PC-3 (cell line): ENCODE measurements at regions of chr14 and their contacts with region 1.

Region 1: DNA sequence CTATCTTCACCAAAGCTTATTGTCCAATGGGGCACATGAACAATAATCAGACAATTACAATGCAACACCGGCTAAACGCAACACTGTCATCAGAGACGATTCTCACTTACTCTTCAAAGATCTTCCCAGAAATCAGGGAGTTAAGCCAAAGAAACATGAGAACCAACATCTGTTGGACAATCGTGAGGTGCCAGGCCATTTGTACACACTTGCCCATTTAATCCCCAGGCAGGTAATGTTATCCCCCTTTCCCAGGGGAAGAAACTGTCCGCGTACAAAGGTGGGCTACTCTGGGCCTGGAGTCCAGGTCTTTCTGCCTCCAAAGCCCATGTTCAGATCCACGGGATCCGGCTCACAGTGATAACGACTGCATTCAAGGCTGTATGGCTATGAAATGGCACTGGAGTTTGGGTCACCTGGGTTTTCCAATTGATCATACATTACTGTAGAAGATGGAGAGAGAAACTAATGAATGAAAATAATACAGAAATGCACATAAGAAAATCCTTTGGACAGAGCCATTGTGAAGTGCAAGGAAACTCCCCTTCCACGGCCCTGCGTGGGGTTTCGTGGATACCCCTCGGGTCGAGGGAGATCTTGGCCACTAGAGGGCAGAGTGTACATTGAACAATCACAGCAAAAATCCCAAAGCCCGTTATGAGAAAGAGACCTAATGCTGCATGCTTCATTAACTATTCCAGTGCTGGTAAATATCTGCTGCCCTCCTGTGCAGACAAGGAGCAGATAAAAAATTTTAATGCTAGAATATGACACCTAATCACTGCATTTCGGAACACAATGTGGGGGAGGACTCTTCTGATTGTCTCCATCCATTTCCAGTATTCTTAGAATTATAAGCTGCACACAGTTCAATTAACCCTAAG is 111.4 kb downstream of the EGLN3 start:
- DNase-seq: peak; percentile 69
- ATAC-seq: peak; percentile 83
- H3K4me3 ChIP-seq: no peak overlapping the region
- H3K27ac ChIP-seq: no peak overlapping the region
- H3K4me1 ChIP-seq: no peaks in the 10 kb centered on the region
- H3K27me3 ChIP-seq: peaks cover 17% of the 10 kb centered on the region; the same call in 1 of the 2 replicates
- CTCF ChIP-seq: peak; percentile 93

Region 2: DNA sequence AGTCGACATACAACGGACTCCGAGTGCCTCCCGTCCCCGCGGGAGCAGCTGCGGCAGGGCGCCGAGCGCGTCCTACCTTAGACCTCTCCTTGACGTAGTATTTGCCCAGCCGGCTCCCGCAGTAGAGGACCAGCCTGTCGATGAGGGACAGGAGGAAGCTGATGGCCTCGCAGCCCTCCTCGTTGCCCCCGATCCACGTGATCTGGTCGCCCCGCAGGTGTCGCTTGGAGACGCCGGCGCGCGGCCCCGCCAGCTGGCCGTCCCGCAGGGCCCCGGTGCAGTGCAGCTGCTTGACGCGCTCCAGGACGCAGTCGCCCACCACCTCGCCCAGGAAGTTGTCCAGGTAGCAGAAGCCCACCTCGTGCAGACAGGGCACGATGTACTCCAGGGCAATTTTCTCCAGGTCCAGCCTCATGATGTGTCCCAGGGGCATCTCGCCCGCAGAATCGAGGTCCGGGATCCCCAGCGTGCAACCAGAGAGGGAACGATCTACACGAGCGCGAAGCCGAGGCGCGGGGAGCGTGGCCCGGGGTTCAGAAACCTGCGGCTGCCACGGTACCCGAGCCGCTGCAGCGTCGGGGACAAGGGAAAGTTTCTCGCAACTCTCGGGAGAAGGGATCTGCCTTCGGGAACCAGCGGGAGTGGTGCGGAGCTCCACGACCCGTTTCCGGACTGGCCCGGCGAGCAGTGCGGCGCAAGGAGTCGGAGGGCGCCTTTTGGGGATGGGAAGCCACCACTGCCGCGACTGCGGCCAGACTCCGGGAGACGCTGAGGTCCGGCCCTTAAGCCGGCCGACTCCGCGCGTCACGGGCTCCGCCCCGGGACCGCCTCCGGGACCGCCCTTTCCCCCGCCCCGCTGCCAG is 111.1 kb after region 1 on chr14 and contains the start of gene EGLN3:
- CTCF ChIA-PET with region 1: no interaction called
- POLR2A ChIA-PET with region 1: no interaction called
- intact Hi-C with region 1: no loop called
- DNase-seq: peak; percentile 85
- ATAC-seq: peak; percentile 99
- H3K4me3 ChIP-seq: peak within 1 kb of the TSS; percentile 69
- H3K27ac ChIP-seq: no peak within 1 kb of the TSS
- H3K4me1 ChIP-seq: peaks cover 12% of the 10 kb centered on the region
- H3K27me3 ChIP-seq: peaks cover 37% of the 10 kb centered on the region
- CTCF ChIP-seq: no peak
- total RNA-seq, gene EGLN3: 2.8 and 3.2 TPM in 2 replicates

Region 3: GRCh38 chr14:34003691-34004090 is 164.3 kb after region 1 on chr14:
- CTCF ChIA-PET with region 1: no interaction called
- POLR2A ChIA-PET with region 1: no interaction called
- intact Hi-C with region 1: no loop called
- DNase-seq: no peak
- ATAC-seq: no peak
- H3K4me3 ChIP-seq: no peak overlapping the region
- H3K27ac ChIP-seq: no peak overlapping the region
- H3K4me1 ChIP-seq: no peaks in the 10 kb centered on the region
- H3K27me3 ChIP-seq: peaks cover 41% of the 10 kb centered on the region
- CTCF ChIP-seq: no peak

Region 4: DNA sequence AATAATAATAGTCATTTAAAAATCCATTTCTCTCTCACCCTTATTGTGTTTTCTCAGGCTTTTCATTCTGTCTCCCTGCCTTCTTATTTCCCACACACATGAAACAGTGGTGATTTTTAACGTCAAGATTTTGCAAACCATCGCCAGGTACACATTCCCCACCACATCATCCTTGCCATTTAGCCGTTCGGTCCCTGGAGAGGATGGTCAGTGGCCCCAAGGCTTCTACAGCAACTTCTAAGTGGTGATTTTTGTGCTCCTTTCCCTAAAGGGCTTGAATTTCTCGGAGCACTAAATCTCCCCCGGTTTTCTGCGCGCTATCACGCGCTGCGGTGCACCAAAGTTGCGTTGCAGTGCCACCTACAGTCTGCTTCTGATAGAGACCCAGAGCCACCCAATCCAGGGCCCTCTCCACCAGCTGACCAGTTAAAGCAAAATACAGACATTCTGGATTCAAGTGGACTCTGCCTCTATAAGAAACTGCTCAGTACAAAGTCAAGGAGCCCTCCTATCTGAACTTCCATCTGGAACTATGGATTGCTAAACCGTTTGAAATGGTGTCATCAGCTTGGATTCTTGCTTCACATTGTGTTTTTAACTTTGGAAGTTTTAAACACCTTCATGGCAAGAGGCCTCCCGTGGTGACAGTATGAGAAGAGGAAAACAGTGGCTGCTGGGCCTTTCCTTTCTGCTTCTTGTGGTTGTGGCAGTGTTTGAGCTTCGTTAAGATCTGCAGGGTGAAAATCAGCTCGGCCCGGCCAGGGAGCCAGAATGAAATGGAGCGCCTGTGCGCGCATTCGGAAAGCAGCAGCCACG is 388.6 kb after region 1 on chr14:
- CTCF ChIA-PET with region 1: no interaction called
- POLR2A ChIA-PET with region 1: interaction called, 3 read pairs
- intact Hi-C with region 1: loop called (anchors 1 kb)
- DNase-seq: peak; percentile 81
- ATAC-seq: peak; percentile 99
- H3K4me3 ChIP-seq: peak overlapping the region; percentile 52
- H3K27ac ChIP-seq: no peak overlapping the region
- H3K4me1 ChIP-seq: peaks cover 14% of the 10 kb centered on the region
- H3K27me3 ChIP-seq: no peaks in the 10 kb centered on the region
- CTCF ChIP-seq: peak; percentile 91

Region 5: DNA sequence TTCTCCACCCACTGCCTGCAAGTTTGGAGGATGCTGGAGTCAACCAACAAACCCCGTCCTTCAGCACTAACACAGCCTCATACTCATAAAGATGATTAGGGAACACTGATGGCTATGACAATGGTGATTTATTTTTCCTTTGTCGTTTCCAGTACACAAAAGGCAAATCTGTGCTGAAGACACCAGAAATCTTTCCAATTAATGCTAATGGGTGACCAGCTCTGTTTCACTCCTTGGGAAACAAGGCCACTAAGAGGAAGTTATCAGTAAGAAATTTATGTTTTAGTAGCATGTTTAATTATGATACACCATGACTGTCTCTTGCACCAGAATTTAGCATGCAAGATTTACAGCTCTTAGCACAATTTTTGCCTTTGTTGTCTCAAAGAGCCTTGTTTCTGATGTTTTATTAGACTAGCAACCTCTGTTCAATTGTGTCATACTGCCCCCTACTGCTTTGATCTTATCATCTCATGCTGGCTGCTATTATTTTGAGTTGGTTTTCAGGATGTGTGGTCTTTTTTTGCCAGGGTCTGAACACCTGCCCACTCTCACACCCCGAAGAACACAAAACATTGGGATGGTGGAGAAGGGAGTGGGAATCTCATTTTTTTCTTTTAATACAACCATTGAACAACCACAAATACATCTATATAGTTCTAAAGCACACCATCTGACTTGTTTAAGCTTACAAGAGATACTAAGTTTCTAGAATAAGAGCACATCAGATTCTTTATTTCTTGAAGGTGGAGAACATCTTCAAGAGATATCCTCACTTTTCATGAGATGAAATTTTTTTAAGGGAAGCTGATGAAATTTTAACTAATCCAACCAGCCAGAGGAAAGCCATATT is 461.7 kb after region 1 on chr14:
- CTCF ChIA-PET with region 1: no interaction called
- POLR2A ChIA-PET with region 1: no interaction called
- intact Hi-C with region 1: loop called (anchors 1 kb)
- DNase-seq: peak; percentile 78
- ATAC-seq: peak; percentile 74
- H3K4me3 ChIP-seq: no peak overlapping the region
- H3K27ac ChIP-seq: no peak overlapping the region
- H3K4me1 ChIP-seq: no peaks in the 10 kb centered on the region
- H3K27me3 ChIP-seq: no peaks in the 10 kb centered on the region
- CTCF ChIP-seq: peak; percentile 92

Region 6: GRCh38 chr14:34322940-34323418 is 483.5 kb after region 1 on chr14:
- CTCF ChIA-PET with region 1: interaction called, 4 read pairs
- POLR2A ChIA-PET with region 1: no interaction called
- intact Hi-C with region 1: loop called (anchors 2 kb)
- DNase-seq: peak; percentile 68
- ATAC-seq: peak; percentile 73
- H3K4me3 ChIP-seq: no peak overlapping the region
- H3K27ac ChIP-seq: no peak overlapping the region
- H3K4me1 ChIP-seq: peaks cover 5% of the 10 kb centered on the region; the same call in 1 of the 2 replicates
- H3K27me3 ChIP-seq: peaks cover 11% of the 10 kb centered on the region; the same call in 1 of the 2 replicates
- CTCF ChIP-seq: peak; percentile 92